CD4-positive, alpha-beta T cell (primary cell): ENCODE measurements at regions of chr1 and their contacts with region 1.

Region 1: GRCh38 chr1:111222308-111223125 is 5.0 kb upstream of the CHI3L2 start:
- DNase-seq: peak; percentile 59 to 90 (median 74)
- ATAC-seq: peak; percentile 21
- H3K4me3 ChIP-seq: peak overlapping the region; percentile 42
- H3K4me3 Mint-ChIP-seq: peak overlapping the region; percentile 85
- H3K27ac ChIP-seq: peak overlapping the region; percentile 70 to 88
- H3K27ac Mint-ChIP-seq: peak overlapping the region; percentile 98
- H3K4me1 ChIP-seq: peaks cover 91% of the 10 kb centered on the region
- H3K4me1 Mint-ChIP-seq: peaks cover 97% of the 10 kb centered on the region
- H3K27me3 ChIP-seq: no peaks in the 10 kb centered on the region
- H3K27me3 Mint-ChIP-seq: no peaks in the 10 kb centered on the region
- CTCF ChIP-seq: peak; percentile 93

Region 2: DNA sequence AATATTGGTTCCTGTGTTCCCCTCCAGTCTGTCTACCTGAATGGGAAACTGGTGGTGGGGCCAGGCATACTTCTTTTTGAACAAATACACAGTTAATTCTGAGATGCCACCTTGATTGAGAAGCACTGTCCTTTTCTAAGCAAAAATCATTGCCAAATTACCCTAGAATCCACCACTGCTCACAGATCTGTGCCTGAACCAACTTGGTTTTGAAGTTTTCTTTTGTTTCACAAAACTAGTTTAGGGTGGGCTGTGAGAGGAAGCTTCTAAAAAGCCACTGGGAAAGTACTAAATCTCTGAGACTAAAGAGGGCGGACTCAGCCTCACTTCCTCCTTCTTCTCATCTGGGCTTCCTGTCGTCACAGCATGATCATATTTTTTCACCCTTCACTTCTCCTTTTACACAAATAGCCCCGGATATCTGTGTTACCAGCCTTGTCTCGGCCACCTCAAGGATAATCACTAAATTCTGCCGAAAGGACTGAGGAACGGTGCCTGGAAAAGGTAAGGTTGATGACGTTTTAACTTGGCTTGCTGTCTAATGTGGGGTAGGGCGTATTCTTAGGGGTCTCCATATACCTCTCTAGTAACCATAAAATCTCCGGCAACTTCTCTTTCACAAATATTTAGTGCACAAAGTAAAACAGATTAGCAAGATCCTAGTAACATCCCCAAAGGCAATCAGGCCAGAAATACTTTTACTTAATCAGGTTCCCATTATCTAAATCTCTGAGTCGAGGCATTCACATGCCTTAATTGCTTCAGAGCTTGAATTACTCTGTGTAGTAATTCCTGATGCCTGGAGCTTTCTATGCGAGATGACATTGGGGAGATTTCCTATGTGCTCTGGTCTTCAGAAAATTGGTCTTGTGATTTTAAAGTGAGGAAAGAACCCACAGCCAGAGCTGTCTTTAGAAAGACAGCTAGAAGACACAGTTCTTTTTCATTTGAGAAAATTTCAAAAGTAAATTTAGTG is 349.5 kb before region 1 on chr1 and contains the start of gene CD53:
- CTCF ChIA-PET with region 1: no interaction called
- POLR2A ChIA-PET with region 1: no interaction called
- intact Hi-C with region 1: loop called in 1 of 2 experiments (anchors 10 kb)
- DNase-seq: peak in 12 of 14 experiments; percentile 24 to 90 (median 50)
- ATAC-seq: peak; percentile 69
- H3K4me3 ChIP-seq: peak within 1 kb of the TSS; percentile 66
- H3K4me3 Mint-ChIP-seq: peak within 1 kb of the TSS; percentile 91
- H3K27ac ChIP-seq: peak within 1 kb of the TSS; percentile 92 to 93
- H3K27ac Mint-ChIP-seq: peak within 1 kb of the TSS; percentile 92
- H3K4me1 ChIP-seq: peaks cover 32% of the 10 kb centered on the region
- H3K4me1 Mint-ChIP-seq: peaks cover 65% of the 10 kb centered on the region
- H3K27me3 ChIP-seq: no peaks in the 10 kb centered on the region
- H3K27me3 Mint-ChIP-seq: no peaks in the 10 kb centered on the region
- CTCF ChIP-seq: no peak
- total RNA-seq, gene CD53: 169 to 176 TPM

Region 3: GRCh38 chr1:111139956-111140679 is 82.4 kb before region 1 on chr1 and contains the starts of genes CEPT1 and DRAM2:
- CTCF ChIA-PET with region 1: interaction called, 4 read pairs
- POLR2A ChIA-PET with region 1: interaction called, 15 read pairs
- intact Hi-C with region 1: loop called in 1 of 2 experiments (anchors 5 kb)
- DNase-seq: peak; percentile 80 to 96 (median 88)
- ATAC-seq: peak; percentile 77
- H3K4me3 ChIP-seq: peak within 1 kb of the TSS; percentile 94
- H3K4me3 Mint-ChIP-seq: peak within 1 kb of the TSS; percentile 100
- H3K27ac ChIP-seq: peak within 1 kb of the TSS; percentile 80 to 91
- H3K27ac Mint-ChIP-seq: peak within 1 kb of the TSS; percentile 90
- H3K4me1 ChIP-seq: peaks cover 17% of the 10 kb centered on the region
- H3K4me1 Mint-ChIP-seq: peaks cover 65% of the 10 kb centered on the region
- H3K27me3 ChIP-seq: no peaks in the 10 kb centered on the region
- H3K27me3 Mint-ChIP-seq: no peaks in the 10 kb centered on the region
- CTCF ChIP-seq: no peak
- total RNA-seq, gene CEPT1: 25.0 to 27.2 TPM
- total RNA-seq, gene DRAM2: 35.7 to 38.7 TPM

Region 4: GRCh38 chr1:111203681-111204200 is 18.8 kb before region 1 on chr1:
- CTCF ChIA-PET with region 1: interaction called, 135 read pairs
- POLR2A ChIA-PET with region 1: interaction called, 756 read pairs
- intact Hi-C with region 1: loop called in 1 of 2 experiments (anchors 1 kb)
- DNase-seq: peak; percentile 52 to 93 (median 84)
- ATAC-seq: peak; percentile 39
- H3K4me3 ChIP-seq: peak overlapping the region; percentile 79
- H3K4me3 Mint-ChIP-seq: peak overlapping the region; percentile 99
- H3K27ac ChIP-seq: peak overlapping the region; percentile 70 to 97
- H3K27ac Mint-ChIP-seq: peak overlapping the region; percentile 90
- H3K4me1 ChIP-seq: peaks cover 50% of the 10 kb centered on the region
- H3K4me1 Mint-ChIP-seq: peaks cover 83% of the 10 kb centered on the region
- H3K27me3 ChIP-seq: no peaks in the 10 kb centered on the region
- H3K27me3 Mint-ChIP-seq: no peaks in the 10 kb centered on the region
- CTCF ChIP-seq: no peak

Region 5: DNA sequence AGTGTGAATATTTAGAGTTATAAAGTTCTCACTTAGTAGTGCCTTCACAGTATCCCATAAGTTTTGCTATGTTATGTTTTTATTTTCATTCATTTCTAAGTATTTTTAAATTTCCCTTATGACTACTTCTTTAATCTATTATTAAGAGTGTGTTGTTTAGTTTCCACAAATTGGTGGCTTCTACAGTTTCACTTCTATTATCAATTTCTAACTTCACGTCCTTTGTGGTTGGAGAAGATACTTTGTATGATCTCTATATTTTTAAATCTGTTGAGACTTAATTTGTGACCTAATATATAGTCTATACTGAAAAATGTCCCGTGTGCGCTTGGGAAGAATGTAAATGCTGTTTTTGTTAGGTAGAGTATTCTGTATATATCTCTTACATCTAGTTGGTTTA is 79.9 kb after region 1 on chr1:
- CTCF ChIA-PET with region 1: no interaction called
- POLR2A ChIA-PET with region 1: no interaction called
- intact Hi-C with region 1: no loop called
- DNase-seq: no peak
- ATAC-seq: no peak
- H3K4me3 ChIP-seq: no peak overlapping the region
- H3K4me3 Mint-ChIP-seq: no peak overlapping the region
- H3K27ac ChIP-seq: no peak overlapping the region
- H3K27ac Mint-ChIP-seq: no peak overlapping the region
- H3K4me1 ChIP-seq: no peaks in the 10 kb centered on the region
- H3K4me1 Mint-ChIP-seq: no peaks in the 10 kb centered on the region
- H3K27me3 ChIP-seq: peaks cover 0 to 6% of the 10 kb centered on the region in 2 experiments
- H3K27me3 Mint-ChIP-seq: no peaks in the 10 kb centered on the region
- CTCF ChIP-seq: no peak

Region 6: DNA sequence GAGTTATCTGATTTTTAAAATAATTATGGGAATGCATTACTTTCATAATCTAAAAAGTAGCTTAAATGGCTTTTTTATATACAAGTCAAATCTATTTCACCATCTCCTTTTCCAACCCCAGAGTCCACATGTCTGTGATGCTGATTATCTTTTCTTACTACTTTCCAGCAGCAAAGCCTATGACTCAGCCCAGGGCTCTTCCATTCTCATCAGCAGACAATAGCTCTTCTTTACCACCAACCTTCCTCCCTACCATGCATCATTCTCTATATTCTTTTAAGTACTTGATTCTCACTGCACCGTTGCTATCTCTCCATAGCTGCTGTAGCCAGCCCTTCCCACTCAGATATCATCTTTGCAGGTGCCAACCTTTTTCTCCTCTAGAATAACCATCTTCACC is 143.7 kb after region 1 on chr1:
- CTCF ChIA-PET with region 1: no interaction called
- POLR2A ChIA-PET with region 1: no interaction called
- intact Hi-C with region 1: no loop called
- DNase-seq: no peak
- ATAC-seq: no peak
- H3K4me3 ChIP-seq: no peak overlapping the region
- H3K4me3 Mint-ChIP-seq: no peak overlapping the region
- H3K27ac ChIP-seq: no peak overlapping the region
- H3K27ac Mint-ChIP-seq: no peak overlapping the region
- H3K4me1 ChIP-seq: no peaks in the 10 kb centered on the region
- H3K4me1 Mint-ChIP-seq: no peaks in the 10 kb centered on the region
- H3K27me3 ChIP-seq: peaks cover 7 to 14% of the 10 kb centered on the region in 2 experiments
- H3K27me3 Mint-ChIP-seq: peaks cover 24% of the 10 kb centered on the region
- CTCF ChIP-seq: no peak

Region 7: GRCh38 chr1:111399792-111400610 is 177.5 kb after region 1 on chr1:
- CTCF ChIA-PET with region 1: interaction called, 9 read pairs
- POLR2A ChIA-PET with region 1: interaction called, 6 read pairs
- intact Hi-C with region 1: loop called (anchors 1 kb)
- DNase-seq: peak in 12 of 14 experiments; percentile 7 to 69 (median 24)
- ATAC-seq: no peak
- H3K4me3 ChIP-seq: no peak overlapping the region
- H3K4me3 Mint-ChIP-seq: no peak overlapping the region
- H3K27ac ChIP-seq: no peak overlapping the region
- H3K27ac Mint-ChIP-seq: no peak overlapping the region
- H3K4me1 ChIP-seq: no peaks in the 10 kb centered on the region
- H3K4me1 Mint-ChIP-seq: peaks cover 40% of the 10 kb centered on the region
- H3K27me3 ChIP-seq: no peaks in the 10 kb centered on the region
- H3K27me3 Mint-ChIP-seq: no peaks in the 10 kb centered on the region
- CTCF ChIP-seq: peak; percentile 84

Region 8: GRCh38 chr1:111553196-111553595 is 330.7 kb after region 1 on chr1:
- CTCF ChIA-PET with region 1: no interaction called
- POLR2A ChIA-PET with region 1: no interaction called
- intact Hi-C with region 1: no loop called
- DNase-seq: no peak
- ATAC-seq: no peak
- H3K4me3 ChIP-seq: no peak overlapping the region
- H3K4me3 Mint-ChIP-seq: no peak overlapping the region
- H3K27ac ChIP-seq: no peak overlapping the region
- H3K27ac Mint-ChIP-seq: no peak overlapping the region
- H3K4me1 ChIP-seq: no peaks in the 10 kb centered on the region
- H3K4me1 Mint-ChIP-seq: peaks cover 4% of the 10 kb centered on the region
- H3K27me3 ChIP-seq: no peaks in the 10 kb centered on the region
- H3K27me3 Mint-ChIP-seq: no peaks in the 10 kb centered on the region
- CTCF ChIP-seq: no peak

Region 9: GRCh38 chr1:111619635-111620440 is 397.3 kb after region 1 on chr1 and contains the start of gene RAP1A:
- CTCF ChIA-PET with region 1: no interaction called
- POLR2A ChIA-PET with region 1: no interaction called
- intact Hi-C with region 1: loop called in 1 of 2 experiments (anchors 10 kb)
- DNase-seq: peak; percentile 88 to 98 (median 95)
- ATAC-seq: peak; percentile 75
- H3K4me3 ChIP-seq: peak within 1 kb of the TSS; percentile 81
- H3K4me3 Mint-ChIP-seq: peak within 1 kb of the TSS; percentile 98
- H3K27ac ChIP-seq: peak within 1 kb of the TSS; percentile 76 to 90
- H3K27ac Mint-ChIP-seq: peak within 1 kb of the TSS; percentile 95
- H3K4me1 ChIP-seq: peaks cover 60% of the 10 kb centered on the region
- H3K4me1 Mint-ChIP-seq: peaks cover 82% of the 10 kb centered on the region
- H3K27me3 ChIP-seq: no peaks in the 10 kb centered on the region
- H3K27me3 Mint-ChIP-seq: no peaks in the 10 kb centered on the region
- CTCF ChIP-seq: no peak
- total RNA-seq, gene RAP1A: 63.8 to 67.1 TPM